Left cardiac atrium (tissue), 4 donors: ENCODE measurements at regions of chr21 and their contacts with region 1.

Region 1: DNA sequence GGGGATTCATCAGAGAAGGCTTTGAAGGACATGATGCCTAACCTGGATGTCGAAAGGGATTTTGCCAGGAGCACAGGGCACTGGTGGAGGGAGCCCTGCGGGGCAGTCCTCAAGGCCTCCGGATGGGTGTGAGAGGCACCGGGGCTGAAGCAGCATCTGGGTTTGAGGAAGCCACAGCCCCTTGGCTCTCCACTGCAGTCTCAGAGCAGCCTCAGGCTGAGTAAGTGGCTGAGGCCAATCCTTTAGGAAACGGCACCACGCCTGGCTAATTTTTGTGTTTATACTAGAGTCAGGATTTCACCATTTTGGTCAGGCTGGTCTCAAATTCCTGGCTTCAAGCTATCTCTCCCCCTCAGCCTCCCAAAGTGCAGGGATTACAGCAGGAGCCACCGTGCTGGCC is 12.0 kb downstream of the ERVH48-1 start:
- DNase-seq: no peak
- ATAC-seq: no peak

Region 2: DNA sequence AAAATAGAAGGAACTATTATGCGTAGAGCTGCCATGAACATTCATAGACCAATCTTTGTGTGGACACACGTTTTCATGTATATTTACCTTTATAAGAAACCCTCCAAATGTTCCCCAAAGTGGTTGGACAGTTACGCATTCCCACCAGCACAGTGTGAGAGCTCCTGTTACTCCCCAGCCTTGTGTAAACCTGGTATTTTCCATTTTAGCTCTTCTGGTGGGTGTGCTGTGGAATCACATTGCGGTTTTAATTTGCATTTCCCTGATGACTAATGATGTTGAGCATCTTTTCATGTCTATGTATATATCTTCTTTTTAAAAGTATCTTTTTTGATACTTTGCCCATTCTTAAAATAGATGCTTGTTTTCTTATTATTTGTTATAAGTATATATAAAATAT is 513.0 kb before region 1 on chr21:
- intact Hi-C with region 1: no loop called
- DNase-seq: no peak
- ATAC-seq: no peak

Region 3: DNA sequence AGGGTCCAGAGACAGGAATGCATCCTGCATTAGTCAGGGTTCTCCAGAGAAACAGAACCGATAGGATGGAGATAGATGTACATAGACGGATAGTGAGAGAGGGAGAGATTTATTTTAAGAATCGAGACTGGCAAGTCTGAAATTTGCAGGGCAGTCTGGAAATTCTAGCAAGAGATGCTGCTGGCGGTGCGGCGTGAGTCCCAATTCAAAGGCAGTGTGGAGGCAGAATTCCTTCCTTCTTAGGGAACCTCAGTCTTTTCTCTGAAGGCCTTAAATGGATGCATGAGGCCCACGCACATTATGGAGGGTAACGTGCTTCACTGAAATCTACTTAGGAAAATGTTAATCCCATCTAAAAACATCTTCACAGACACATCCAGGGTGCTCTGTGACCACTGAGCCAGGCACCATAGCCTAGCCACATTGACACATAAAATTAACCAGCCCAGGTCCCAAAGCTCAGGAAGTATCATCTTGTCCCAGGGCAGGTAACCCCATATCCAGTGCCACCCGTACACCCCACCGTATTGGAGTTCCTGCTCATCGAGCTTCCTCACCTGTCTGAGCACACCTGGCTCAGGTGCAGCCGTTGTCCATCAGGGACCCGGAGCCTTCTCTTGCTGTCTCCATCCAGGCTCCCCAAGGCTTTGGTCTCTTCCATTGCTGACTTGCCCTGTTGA is 51.2 kb after region 1 on chr21:
- intact Hi-C with region 1: loop called in 1 of 2 experiments (anchors 10 kb)
- DNase-seq: no peak
- ATAC-seq: no peak

Region 4: GRCh38 chr21:43012595-43012994 is 99.1 kb after region 1 on chr21:
- intact Hi-C with region 1: no loop called
- DNase-seq: no peak
- ATAC-seq: peak in 1 of 2 donors; percentile 59